ENCODE measurements at regions of chr18 and their contacts with region 1.

Region 1: DNA sequence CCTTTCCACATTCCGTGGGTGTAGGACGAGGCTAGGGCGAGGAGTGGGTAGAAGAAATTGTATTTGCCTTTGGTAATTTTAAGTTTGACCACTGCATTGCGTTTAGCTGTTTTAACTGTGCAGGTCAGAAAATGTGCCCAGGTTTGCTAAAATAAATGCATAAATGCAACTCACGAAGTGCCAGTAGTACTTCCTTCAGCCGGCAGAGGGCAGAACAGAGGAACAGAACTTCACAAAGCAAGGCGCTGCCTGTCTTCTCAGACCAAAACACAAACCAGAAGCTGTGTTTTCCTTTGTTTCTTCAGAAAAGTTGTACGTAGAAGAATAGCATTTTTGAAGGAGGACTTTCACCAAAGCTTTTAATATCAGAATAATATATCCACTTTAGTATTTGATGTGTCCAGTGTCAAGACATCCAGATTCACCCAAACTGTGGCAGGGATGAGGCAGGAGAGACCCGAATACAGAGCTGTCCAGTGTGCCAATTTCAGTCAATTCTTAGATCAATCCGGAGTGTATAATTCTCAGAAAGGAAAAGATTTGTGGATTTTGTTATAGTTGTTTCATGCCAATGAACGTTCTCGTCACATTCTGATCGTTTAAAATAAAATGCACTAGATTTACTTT is 348.6 kb downstream of the DLGAP1 start:
- DNase-seq: peak; percentile 84
- ATAC-seq: peak; percentile 72
- H3K4me3 Mint-ChIP-seq: no peak overlapping the region
- H3K27ac Mint-ChIP-seq: peak overlapping the region; percentile 73
- H3K4me1 Mint-ChIP-seq: peaks cover 27% of the 10 kb centered on the region
- H3K27me3 Mint-ChIP-seq: no peaks in the 10 kb centered on the region
- CTCF ChIP-seq: peak; percentile 88

Region 2: GRCh38 chr18:4096486-4096885 is 10.0 kb before region 1 on chr18:
- CTCF ChIA-PET with region 1: interaction called, 12 read pairs
- POLR2A ChIA-PET with region 1: no interaction called
- DNase-seq: no peak
- ATAC-seq: no peak
- H3K4me3 Mint-ChIP-seq: no peak overlapping the region
- H3K27ac Mint-ChIP-seq: no peak overlapping the region
- H3K4me1 Mint-ChIP-seq: peaks cover 34% of the 10 kb centered on the region
- H3K27me3 Mint-ChIP-seq: no peaks in the 10 kb centered on the region
- CTCF ChIP-seq: no peak

Region 3: GRCh38 chr18:4119813-4120212 is 13.3 kb after region 1 on chr18:
- CTCF ChIA-PET with region 1: interaction called, 48 read pairs
- POLR2A ChIA-PET with region 1: interaction called, 4 read pairs
- DNase-seq: no peak
- ATAC-seq: no peak
- H3K4me3 Mint-ChIP-seq: peak overlapping the region; percentile 40
- H3K27ac Mint-ChIP-seq: peak overlapping the region; percentile 88
- H3K4me1 Mint-ChIP-seq: peaks cover 85% of the 10 kb centered on the region
- H3K27me3 Mint-ChIP-seq: no peaks in the 10 kb centered on the region
- CTCF ChIP-seq: no peak

Region 4: DNA sequence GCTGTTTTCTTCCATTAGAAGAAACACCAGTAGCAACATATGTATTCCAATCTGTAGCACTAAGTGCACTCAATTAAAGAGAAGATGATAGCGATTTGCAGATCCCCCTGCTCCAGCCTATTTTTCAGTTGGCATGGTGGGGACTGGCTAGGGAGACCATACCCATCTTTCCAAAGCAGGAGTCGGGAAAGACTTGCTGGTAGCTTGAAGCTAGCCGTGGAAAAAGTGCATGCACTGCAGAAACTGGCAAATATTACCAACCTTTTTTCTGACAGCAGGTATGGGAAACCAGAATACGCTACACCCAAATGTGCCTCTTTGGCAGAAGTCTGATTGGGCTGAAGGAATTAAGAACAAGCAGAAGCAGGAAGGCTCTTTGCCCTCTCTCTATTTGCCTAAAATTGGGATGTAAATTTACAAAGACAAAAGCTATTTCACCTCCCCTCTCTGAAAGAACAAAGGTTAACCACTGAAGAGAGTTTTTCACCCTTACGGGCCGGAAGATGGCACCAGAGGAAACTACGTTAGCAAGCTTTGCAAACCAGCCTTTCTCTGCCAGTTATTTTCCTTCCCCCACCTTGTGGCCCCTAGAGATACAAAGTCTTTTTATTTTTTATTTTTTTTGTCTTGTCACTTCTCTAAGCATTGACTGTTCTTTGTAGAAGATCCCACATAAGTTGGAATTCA is 75.5 kb after region 1 on chr18:
- CTCF ChIA-PET with region 1: interaction called, 47 read pairs
- POLR2A ChIA-PET with region 1: no interaction called
- DNase-seq: peak; percentile 19
- ATAC-seq: peak; percentile 95
- H3K4me3 Mint-ChIP-seq: no peak overlapping the region
- H3K27ac Mint-ChIP-seq: peak overlapping the region; percentile 83
- H3K4me1 Mint-ChIP-seq: peaks cover 48% of the 10 kb centered on the region
- H3K27me3 Mint-ChIP-seq: no peaks in the 10 kb centered on the region
- CTCF ChIP-seq: no peak